A673 (cell line): ENCODE measurements at regions of chr12 and their contacts with region 1.

Region 1: DNA sequence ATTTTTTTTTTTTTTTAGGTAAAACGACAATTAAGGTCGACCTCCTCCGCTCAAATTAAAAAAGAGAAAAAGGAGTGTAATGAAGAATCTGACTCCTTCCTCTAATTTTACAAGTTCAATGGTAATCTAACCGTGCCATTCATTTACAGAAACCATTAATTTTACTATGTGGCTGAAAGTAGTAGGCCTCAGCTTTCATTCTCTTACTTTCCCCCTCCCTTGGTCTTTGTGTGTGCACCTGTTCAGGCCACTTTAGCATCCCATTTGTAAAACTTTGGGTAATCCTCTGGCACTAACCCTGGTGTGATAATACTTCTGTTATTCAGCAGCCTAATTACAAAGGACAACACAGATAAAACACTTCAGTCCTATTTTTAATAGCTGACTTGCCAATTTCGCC is 128.1 kb downstream of the ASCL1 start:
- DNase-seq: no peak
- H3K4me3 ChIP-seq: no peak overlapping the region
- H3K27ac ChIP-seq: no peak overlapping the region
- H3K4me1 ChIP-seq: no peaks in the 10 kb centered on the region
- H3K27me3 ChIP-seq: peaks cover 6% of the 10 kb centered on the region
- CTCF ChIP-seq: no peak

Region 2: GRCh38 chr12:102513272-102513671 is 572.3 kb before region 1 on chr12:
- CTCF ChIA-PET with region 1: no interaction called
- POLR2A ChIA-PET with region 1: no interaction called
- intact Hi-C with region 1: no loop called
- DNase-seq: no peak
- H3K4me3 ChIP-seq: no peak overlapping the region
- H3K27ac ChIP-seq: no peak overlapping the region
- H3K4me1 ChIP-seq: no peaks in the 10 kb centered on the region
- H3K27me3 ChIP-seq: no peaks in the 10 kb centered on the region
- CTCF ChIP-seq: no peak

Region 3: GRCh38 chr12:102948941-102949352 is 136.6 kb before region 1 on chr12:
- CTCF ChIA-PET with region 1: interaction called, 10 read pairs
- POLR2A ChIA-PET with region 1: no interaction called
- intact Hi-C with region 1: no loop called
- DNase-seq: peak; percentile 60
- H3K4me3 ChIP-seq: no peak overlapping the region
- H3K27ac ChIP-seq: no peak overlapping the region
- H3K4me1 ChIP-seq: no peaks in the 10 kb centered on the region
- H3K27me3 ChIP-seq: peaks cover 77% of the 10 kb centered on the region
- CTCF ChIP-seq: peak; percentile 92